ENCODE measurements at regions of chr5 and their contacts with region 1.

Region 1: GRCh38 chr5:145825751-145826180 is 9.4 kb downstream of the PRELID2 start:
- DNase-seq: no peak
- ATAC-seq: no peak
- H3K4me3 Mint-ChIP-seq: no peak overlapping the region
- H3K27ac Mint-ChIP-seq: no peak overlapping the region
- H3K4me1 Mint-ChIP-seq: peaks cover 8% of the 10 kb centered on the region
- H3K27me3 Mint-ChIP-seq: peaks cover 6% of the 10 kb centered on the region

Region 2: DNA sequence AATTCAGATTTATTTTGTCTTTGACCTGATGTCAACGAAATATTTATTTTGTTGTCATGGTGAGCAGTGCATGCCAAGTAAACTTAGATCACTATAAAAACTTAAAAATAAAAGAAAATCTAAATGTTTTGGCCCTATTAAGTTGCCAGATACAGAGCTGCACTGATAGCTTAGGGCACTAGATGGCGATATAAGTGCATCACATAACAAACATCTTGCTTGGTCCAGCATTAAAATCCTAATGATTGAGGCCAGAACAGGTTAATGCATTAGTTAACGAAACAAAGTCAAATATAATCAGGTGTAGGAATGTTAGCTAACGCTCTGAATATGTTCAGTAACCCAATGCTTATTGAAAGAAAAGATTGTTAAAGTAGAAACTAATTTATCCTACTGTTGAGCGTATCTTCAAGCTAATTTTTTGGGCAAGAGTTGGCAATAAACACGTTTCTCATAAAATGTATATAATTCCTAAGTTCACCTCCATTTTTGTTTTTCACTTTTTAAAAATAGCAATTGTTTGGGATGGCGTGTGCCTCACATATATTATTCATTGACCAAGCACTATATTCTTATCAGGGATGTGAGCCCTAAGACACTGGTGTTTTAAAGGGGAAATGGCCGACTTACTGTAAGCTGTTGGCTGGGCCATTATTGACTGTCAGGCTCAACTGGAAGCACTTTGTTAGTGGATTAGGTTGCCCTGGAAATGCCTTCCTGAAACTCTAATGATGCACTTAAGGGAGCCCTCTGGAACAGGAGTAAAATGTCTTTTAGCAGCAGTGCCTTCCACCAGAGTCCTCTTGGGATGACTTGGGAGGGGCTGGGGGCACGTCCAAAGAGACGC is 1621.8 kb before region 1 on chr5:
- CTCF ChIA-PET with region 1: interaction called, 16 read pairs
- DNase-seq: peak; percentile 48
- ATAC-seq: peak; percentile 72
- H3K4me3 Mint-ChIP-seq: no peak overlapping the region
- H3K27ac Mint-ChIP-seq: no peak overlapping the region
- H3K4me1 Mint-ChIP-seq: peaks cover 6% of the 10 kb centered on the region
- H3K27me3 Mint-ChIP-seq: peaks cover 55% of the 10 kb centered on the region

Region 3: DNA sequence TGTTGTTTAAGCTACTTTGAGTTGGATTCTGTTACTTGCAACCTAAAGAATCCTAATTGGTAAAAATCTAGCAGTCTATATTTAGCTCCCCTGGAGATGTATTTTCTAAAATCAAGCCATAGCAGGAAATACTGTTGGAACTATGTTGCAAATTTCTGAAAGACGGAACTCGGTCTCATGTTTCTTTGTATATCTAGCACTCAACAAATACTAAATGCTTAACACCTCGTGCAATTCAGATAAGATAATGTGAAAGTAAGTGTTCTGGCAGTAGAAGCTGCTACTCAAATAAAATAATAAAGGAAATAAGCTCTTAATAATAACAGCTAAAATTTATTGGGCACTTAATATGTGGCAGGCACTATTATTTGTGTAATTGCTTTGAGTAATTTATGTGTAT is 20.3 kb after region 1 on chr5:
- CTCF ChIA-PET with region 1: no interaction called
- DNase-seq: no peak
- ATAC-seq: no peak
- H3K4me3 Mint-ChIP-seq: no peak overlapping the region
- H3K27ac Mint-ChIP-seq: no peak overlapping the region
- H3K4me1 Mint-ChIP-seq: no peaks in the 10 kb centered on the region
- H3K27me3 Mint-ChIP-seq: peaks cover 3% of the 10 kb centered on the region

Region 4: GRCh38 chr5:145856285-145856818 is 30.6 kb after region 1 on chr5:
- CTCF ChIA-PET with region 1: no interaction called
- DNase-seq: no peak
- ATAC-seq: no peak
- H3K4me3 Mint-ChIP-seq: no peak overlapping the region
- H3K27ac Mint-ChIP-seq: no peak overlapping the region
- H3K4me1 Mint-ChIP-seq: no peaks in the 10 kb centered on the region
- H3K27me3 Mint-ChIP-seq: peaks cover 14% of the 10 kb centered on the region